PC-3 (cell line): ENCODE measurements at regions of chr2 and their contacts with region 1.

Region 1: GRCh38 chr2:226835796-226836547 is at the start of gene RHBDD1:
- DNase-seq: peak; percentile 97
- ATAC-seq: peak; percentile 89
- H3K4me3 ChIP-seq: peak within 1 kb of the TSS; percentile 84
- H3K27ac ChIP-seq: peak within 1 kb of the TSS; percentile 95
- H3K4me1 ChIP-seq: peaks cover 39% of the 10 kb centered on the region
- H3K27me3 ChIP-seq: no peaks in the 10 kb centered on the region
- CTCF ChIP-seq: no peak
- total RNA-seq, gene RHBDD1: 7.8 and 9.1 TPM in 2 replicates

Region 2: GRCh38 chr2:226869371-226869770 is 33.4 kb after region 1 on chr2:
- CTCF ChIA-PET with region 1: no interaction called
- POLR2A ChIA-PET with region 1: no interaction called
- intact Hi-C with region 1: loop called (anchors 1 kb)
- DNase-seq: peak; percentile 36
- ATAC-seq: peak; percentile 86
- H3K4me3 ChIP-seq: no peak overlapping the region
- H3K27ac ChIP-seq: no peak overlapping the region
- H3K4me1 ChIP-seq: 0 out of 2 replicates have a peak, but pooled peaks cover 7% of the 10 kb centered on the region
- H3K27me3 ChIP-seq: no peaks in the 10 kb centered on the region
- CTCF ChIP-seq: no peak

Region 3: GRCh38 chr2:226911932-226912331 is 76.0 kb after region 1 on chr2:
- CTCF ChIA-PET with region 1: no interaction called
- POLR2A ChIA-PET with region 1: no interaction called
- intact Hi-C with region 1: loop called (anchors 5 kb)
- DNase-seq: peak; percentile 78
- ATAC-seq: peak; percentile 97
- H3K4me3 ChIP-seq: no peak overlapping the region
- H3K27ac ChIP-seq: no peak overlapping the region
- H3K4me1 ChIP-seq: peaks cover 8% of the 10 kb centered on the region; the same call in 1 of the 2 replicates
- H3K27me3 ChIP-seq: no peaks in the 10 kb centered on the region
- CTCF ChIP-seq: no peak

Region 4: GRCh38 chr2:226984750-226985582 is 149.0 kb after region 1 on chr2:
- CTCF ChIA-PET with region 1: interaction called, 4 read pairs
- POLR2A ChIA-PET with region 1: interaction called, 14 read pairs
- intact Hi-C with region 1: loop called (anchors 2 kb)
- DNase-seq: peak; percentile 75
- ATAC-seq: peak; percentile 83
- H3K4me3 ChIP-seq: no peak overlapping the region
- H3K27ac ChIP-seq: no peak overlapping the region
- H3K4me1 ChIP-seq: 0 out of 2 replicates have a peak, but pooled peaks cover 3% of the 10 kb centered on the region
- H3K27me3 ChIP-seq: no peaks in the 10 kb centered on the region
- CTCF ChIP-seq: peak; percentile 79

Region 5: DNA sequence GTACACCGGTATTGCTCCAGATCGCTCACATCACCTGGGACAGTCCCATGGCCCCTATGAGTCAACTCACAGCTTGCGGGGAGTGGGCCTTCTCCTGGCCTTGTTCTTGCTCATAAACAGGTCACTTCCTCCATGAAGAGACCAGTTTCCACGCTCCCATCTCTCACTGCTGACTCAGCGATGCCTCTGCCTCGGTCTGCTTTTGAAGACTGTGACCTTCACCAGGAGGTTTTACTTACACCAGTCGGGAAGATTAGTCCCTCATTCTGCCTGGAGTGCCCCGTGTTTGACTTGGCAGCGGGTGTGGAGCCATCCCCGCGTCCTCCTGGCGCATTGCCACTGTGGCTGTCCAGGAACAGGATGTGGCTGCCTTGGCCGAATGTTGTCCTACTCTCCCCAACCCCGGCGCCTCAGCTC is 159.7 kb after region 1 on chr2:
- CTCF ChIA-PET with region 1: no interaction called
- POLR2A ChIA-PET with region 1: no interaction called
- intact Hi-C with region 1: no loop called
- DNase-seq: peak; percentile 97
- ATAC-seq: peak; percentile 95
- H3K4me3 ChIP-seq: peak overlapping the region; percentile 57
- H3K27ac ChIP-seq: peak overlapping the region; percentile 84
- H3K4me1 ChIP-seq: peaks cover 25% of the 10 kb centered on the region
- H3K27me3 ChIP-seq: no peaks in the 10 kb centered on the region
- CTCF ChIP-seq: no peak